Breast epithelium (tissue), 4 donors: ENCODE measurements at regions of chr1 and their contacts with region 1.

Region 1: DNA sequence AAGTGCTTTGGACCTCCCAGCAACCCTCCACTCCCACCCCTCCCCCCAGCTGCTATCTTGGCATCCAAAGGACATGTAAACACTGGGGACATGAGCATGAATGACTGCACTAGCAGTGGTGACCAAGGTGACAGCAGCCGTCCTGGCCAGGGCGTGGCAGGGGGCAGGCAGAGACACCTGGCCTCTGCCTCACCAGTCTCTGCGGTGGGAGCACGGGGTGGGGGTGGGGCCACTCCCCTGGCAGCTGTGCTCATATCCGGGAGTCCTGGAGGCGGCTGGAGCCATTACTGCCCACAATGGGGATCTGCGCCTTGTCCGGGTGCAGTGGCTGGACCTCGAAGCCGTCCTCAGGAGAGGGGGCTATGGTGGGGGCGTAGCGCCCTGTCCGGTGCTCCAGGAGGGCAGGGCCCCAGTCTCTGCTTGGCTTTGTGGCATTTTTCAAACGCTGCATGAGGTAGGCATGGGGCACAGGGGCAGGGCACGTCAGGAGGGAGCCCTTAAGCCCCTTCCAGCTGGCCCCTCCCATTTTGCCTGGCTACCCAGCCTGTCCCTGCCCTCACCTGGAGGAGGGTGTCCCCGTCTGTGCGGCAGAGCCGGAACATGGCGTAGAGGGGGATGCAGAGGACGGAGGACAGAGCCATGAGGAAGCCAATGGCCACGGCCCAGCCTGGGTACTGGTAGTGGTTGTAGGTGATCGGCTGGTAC is 6.0 kb downstream of the CCDC24 start:
- DNase-seq: no peak
- H3K4me3 ChIP-seq: no peak overlapping the region
- H3K27ac ChIP-seq: no peak overlapping the region
- H3K4me1 ChIP-seq: no peaks in the 10 kb centered on the region
- H3K27me3 ChIP-seq: no peaks in the 10 kb centered on the region
- CTCF ChIP-seq: no peak
- POLR2A ChIP-seq: no peak

Region 2: GRCh38 chr1:42529724-42530181 is 1467.7 kb before region 1 on chr1:
- intact Hi-C with region 1: no loop called
- DNase-seq: no peak
- H3K4me3 ChIP-seq: no peak overlapping the region
- H3K27ac ChIP-seq: no peak overlapping the region
- H3K4me1 ChIP-seq: no peaks in the 10 kb centered on the region
- H3K27me3 ChIP-seq: no peaks in the 10 kb centered on the region
- CTCF ChIP-seq: no peak
- POLR2A ChIP-seq: no peak

Region 3: GRCh38 chr1:44021581-44022321 is 24.3 kb after region 1 on chr1:
- intact Hi-C with region 1: loop called (anchors 2 kb)
- DNase-seq: no peak
- H3K4me3 ChIP-seq: no peak overlapping the region
- H3K27ac ChIP-seq: peak overlapping the region in 1 of 2 donors; percentile 58
- H3K4me1 ChIP-seq: no peaks in the 10 kb centered on the region
- H3K27me3 ChIP-seq: no peaks in the 10 kb centered on the region
- CTCF ChIP-seq: no peak
- POLR2A ChIP-seq: no peak